ENCODE measurements at regions of chr7 and their contacts with region 1.

Region 1: DNA sequence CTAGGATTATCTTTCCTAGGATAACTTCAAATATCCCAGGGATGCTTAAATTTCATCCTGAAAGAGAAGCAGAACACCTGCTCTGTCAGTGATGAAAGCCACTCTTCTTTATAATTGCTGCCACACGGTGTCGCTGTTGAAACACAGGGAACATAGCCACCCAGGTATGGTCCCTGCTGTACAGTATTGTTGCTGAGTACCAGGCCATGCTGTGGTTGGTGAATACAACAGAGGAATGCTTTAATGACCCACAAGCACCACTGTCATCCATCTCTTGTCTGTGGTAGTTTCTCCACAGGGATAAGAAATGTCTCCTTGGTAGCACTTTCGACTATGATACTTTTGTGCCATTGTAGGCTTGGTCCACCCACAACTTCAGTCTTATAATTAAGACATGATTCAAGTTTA is 70.6 kb upstream of the STARD3NL start:
- DNase-seq: peak; percentile 73 to 74
- H3K4me3 ChIP-seq: no peak overlapping the region
- H3K27ac ChIP-seq: no peak overlapping the region
- H3K4me1 ChIP-seq: peaks cover 0 to 3% of the 10 kb centered on the region in 2 donors
- H3K27me3 ChIP-seq: no peaks in the 10 kb centered on the region
- CTCF ChIP-seq: peak; percentile 54 to 84 (median 69)
- POLR2A ChIP-seq: no peak

Region 2: DNA sequence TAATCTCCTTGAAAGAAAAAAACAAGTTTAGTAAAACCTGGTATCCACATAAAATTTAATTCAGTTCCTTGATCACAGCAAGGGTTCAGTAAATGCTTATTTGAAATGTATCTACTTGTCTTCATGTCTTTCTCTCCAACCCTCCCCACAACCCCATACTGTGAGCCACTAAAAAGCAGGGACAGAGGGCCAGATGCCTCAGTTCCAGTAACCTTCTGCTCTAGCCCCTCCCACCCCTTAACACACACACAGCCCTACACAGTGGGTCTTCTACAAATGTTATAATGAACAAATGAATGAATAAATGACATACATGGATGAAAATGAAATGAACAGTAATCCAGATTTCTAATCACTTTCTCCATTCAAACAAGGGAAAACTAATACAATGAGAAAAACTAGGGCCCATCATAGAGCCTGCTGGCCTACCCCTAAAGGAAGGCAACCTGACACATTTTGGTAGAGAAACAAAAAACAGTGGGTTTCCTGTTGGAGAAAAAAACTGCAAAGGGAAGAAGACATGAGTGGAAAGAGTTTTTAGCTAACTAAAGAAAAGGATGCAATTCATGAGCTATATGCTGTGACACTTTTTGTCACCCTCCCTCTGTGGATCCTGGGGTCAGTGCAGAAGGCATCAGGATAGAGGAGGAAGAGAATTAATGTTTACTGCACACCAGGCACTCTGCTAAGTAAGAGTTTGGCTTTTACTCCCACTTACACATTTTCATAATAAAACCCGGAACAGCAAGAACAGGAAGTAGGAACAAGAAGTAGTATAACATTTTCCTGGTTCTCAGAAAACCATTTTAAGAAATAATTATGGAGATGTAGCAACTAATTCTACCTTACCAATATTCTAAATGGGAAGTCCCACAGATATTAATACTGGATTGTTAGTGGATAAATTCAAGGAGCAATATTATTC is 696.9 kb before region 1 on chr7:
- intact Hi-C with region 1: no loop called
- DNase-seq: no peak
- H3K4me3 ChIP-seq: no peak overlapping the region
- H3K27ac ChIP-seq: peak overlapping the region in 1 of 3 donors; percentile 6
- H3K4me1 ChIP-seq: peaks cover 12 to 27% of the 10 kb centered on the region in 2 donors
- H3K27me3 ChIP-seq: no peaks in the 10 kb centered on the region
- CTCF ChIP-seq: no peak
- POLR2A ChIP-seq: no peak

Region 3: DNA sequence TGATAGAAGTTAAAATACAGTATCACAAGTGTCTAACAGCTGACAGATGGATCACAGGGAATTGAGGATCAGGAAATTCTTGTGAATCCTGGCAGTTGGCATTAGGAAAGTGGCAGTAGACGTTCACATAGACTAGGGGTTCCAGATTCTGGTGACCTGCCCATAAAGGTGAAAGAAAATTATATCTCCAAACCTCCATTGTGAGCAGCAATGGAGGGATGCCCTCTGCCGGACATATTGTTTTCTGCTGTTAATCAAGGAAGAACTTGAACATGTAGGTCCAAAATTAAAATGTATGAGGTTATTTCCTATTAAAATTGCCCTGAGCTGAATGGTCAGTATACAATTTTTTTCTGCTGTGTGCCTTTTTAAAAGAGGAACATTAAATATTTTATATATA is 254.0 kb before region 1 on chr7:
- intact Hi-C with region 1: no loop called
- DNase-seq: peak in 1 of 2 donors; percentile 14
- H3K4me3 ChIP-seq: no peak overlapping the region
- H3K27ac ChIP-seq: no peak overlapping the region
- H3K4me1 ChIP-seq: no peaks in the 10 kb centered on the region
- H3K27me3 ChIP-seq: no peaks in the 10 kb centered on the region
- CTCF ChIP-seq: peak in 3 of 6 experiments; percentile 23 to 45 (median 34)
- POLR2A ChIP-seq: no peak

Region 4: GRCh38 chr7:37916673-37917660 is 190.5 kb before region 1 on chr7 and contains the start of gene SFRP4:
- intact Hi-C with region 1: loop called (anchors 10 kb)
- DNase-seq: peak; percentile 55 to 67
- H3K4me3 ChIP-seq: peak within 1 kb of the TSS in 2 of 3 donors; percentile 28 to 56
- H3K27ac ChIP-seq: peak within 1 kb of the TSS in 2 of 3 donors; percentile 65 to 72
- H3K4me1 ChIP-seq: peaks cover 16 to 24% of the 10 kb centered on the region in 2 donors
- H3K27me3 ChIP-seq: no peaks in the 10 kb centered on the region
- CTCF ChIP-seq: peak in 5 of 6 experiments; percentile 32 to 77 (median 75)
- POLR2A ChIP-seq: peak in 1 of 2 donors; percentile 38
- total RNA-seq, gene SFRP4: 1.8 to 21.8 (median 9.7) TPM

Region 5: GRCh38 chr7:38034062-38034907 is 73.2 kb before region 1 on chr7:
- intact Hi-C with region 1: no loop called
- DNase-seq: no peak
- H3K4me3 ChIP-seq: no peak overlapping the region
- H3K27ac ChIP-seq: no peak overlapping the region
- H3K4me1 ChIP-seq: no peaks in the 10 kb centered on the region
- H3K27me3 ChIP-seq: no peaks in the 10 kb centered on the region
- CTCF ChIP-seq: no peak
- POLR2A ChIP-seq: no peak

Region 6: DNA sequence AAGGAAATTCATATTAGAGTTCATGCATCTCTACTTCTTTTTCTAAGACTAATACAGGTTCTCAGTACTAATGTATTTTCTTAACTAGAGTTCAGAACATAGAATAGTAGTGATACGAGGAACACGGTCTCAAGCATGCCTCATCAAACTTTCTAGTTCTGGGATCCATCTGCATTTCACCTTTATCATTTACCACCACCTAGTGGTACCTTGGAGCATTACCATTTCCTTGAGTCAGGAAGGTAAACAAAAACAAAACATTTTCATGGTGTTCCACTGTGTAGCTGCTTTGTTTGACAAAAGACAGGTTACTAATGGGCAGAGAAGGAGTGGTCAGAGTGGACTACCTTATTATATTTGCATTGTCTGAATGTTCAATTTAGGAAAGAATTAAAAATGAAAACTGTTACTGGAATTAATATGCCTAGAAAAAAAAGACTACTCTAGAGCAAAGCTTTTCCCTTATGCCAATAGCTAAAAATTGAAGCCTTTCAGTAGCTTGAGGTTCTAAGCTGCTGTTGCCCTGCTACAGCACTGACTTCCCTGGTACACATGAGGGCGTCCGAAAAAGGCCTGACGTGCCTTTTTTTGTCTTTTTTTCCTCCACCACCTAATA is 115.1 kb after region 1 on chr7:
- intact Hi-C with region 1: loop called (anchors 5 kb)
- DNase-seq: no peak
- H3K4me3 ChIP-seq: no peak overlapping the region
- H3K27ac ChIP-seq: peak overlapping the region in 1 of 3 donors; percentile 39
- H3K4me1 ChIP-seq: no peaks in the 10 kb centered on the region
- H3K27me3 ChIP-seq: no peaks in the 10 kb centered on the region
- CTCF ChIP-seq: peak; percentile 70 to 98 (median 86)
- POLR2A ChIP-seq: no peak

Measured in thyroid gland (tissue), 4 donors.